Gastrocnemius medialis (tissue), 4 donors: ENCODE measurements at regions of chr17 and their contacts with region 1.

Region 1: GRCh38 chr17:65561394-65562205 is at the start of gene AXIN2:
- DNase-seq: peak; percentile 86 to 91
- ATAC-seq: peak; percentile 51 to 59
- H3K4me3 ChIP-seq: peak within 1 kb of the TSS in 2 of 4 donors; percentile 72 to 99
- H3K27ac ChIP-seq: no peak within 1 kb of the TSS
- H3K4me1 ChIP-seq: peaks cover 47 to 48% of the 10 kb centered on the region in 2 donors
- H3K27me3 ChIP-seq: no peaks in the 10 kb centered on the region
- CTCF ChIP-seq: peak in 3 of 5 experiments; percentile 14 to 49 (median 43)
- POLR2A ChIP-seq: peak in 1 of 2 donors; percentile 69
- total RNA-seq, gene AXIN2: 9.9 to 27.2 (median 17.9) TPM

Region 2: DNA sequence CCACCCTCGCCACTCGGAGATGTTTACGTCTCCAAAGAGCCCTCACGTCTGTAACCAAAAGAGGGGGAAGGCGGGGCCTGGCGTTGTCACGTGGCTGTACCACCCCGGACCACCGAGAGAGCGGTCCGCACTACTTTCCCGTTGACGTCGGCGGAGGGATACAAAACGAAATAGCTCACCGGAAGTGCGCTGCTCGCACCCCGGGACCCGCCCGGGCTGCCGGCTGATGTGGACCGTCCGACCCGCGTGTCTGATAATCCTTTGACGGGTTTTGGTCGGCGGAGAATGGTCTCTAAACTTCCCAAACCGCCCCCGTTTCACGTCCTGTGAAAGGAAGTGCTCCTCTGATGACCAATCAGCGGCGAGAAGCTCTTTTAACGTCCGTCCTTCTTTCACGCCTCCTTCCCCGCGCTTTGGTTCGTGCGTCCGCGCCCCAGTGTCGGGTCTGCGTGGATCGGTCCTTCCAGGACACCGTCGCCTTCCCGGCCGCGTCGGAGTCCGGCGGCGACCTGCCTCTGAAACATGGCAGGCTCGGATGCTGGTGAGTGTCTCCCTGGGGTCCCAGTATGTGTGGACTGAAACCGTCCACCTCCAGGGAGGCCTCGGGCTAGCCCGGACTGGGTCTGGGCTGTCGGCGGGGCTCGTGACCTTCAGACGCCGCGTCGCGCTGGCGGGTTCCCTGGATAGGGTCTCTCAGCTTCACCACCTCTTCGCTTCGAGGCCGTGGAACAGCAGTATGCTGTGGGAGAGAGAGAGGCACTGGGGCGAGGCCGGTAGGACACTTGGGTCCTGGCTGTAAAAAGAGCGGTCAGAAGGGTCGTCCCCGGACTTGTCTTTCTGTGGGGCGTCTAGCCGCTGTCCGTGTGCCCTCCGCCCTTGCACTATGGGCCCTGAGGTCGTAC is 1054.8 kb before region 1 on chr17 and contains the start of gene CEP95:
- in situ Hi-C with region 1: no loop called
- intact Hi-C with region 1: loop called (anchors 5 kb)
- DNase-seq: peak; percentile 94 to 97
- ATAC-seq: peak; percentile 81 to 83
- H3K4me3 ChIP-seq: peak within 1 kb of the TSS; percentile 89 to 98 (median 96)
- H3K27ac ChIP-seq: peak within 1 kb of the TSS; percentile 97 to 100 (median 99)
- H3K4me1 ChIP-seq: peaks cover 36 to 40% of the 10 kb centered on the region in 2 donors
- H3K27me3 ChIP-seq: no peaks in the 10 kb centered on the region
- CTCF ChIP-seq: no peak
- POLR2A ChIP-seq: peak; percentile 82 to 83
- total RNA-seq, gene CEP95: 6.5 to 18.8 (median 17.7) TPM

Region 3: GRCh38 chr17:64975329-64976087 is 586.1 kb before region 1 on chr17:
- in situ Hi-C with region 1: loop called in 3 of 4 experiments (anchors 25 kb)
- intact Hi-C with region 1: no loop called
- DNase-seq: peak; percentile 89 to 92
- ATAC-seq: peak; percentile 90 to 94
- H3K4me3 ChIP-seq: peak overlapping the region; percentile 70 to 95 (median 84)
- H3K27ac ChIP-seq: peak overlapping the region; percentile 94 to 100 (median 98)
- H3K4me1 ChIP-seq: peaks cover 13% of the 10 kb centered on the region in 2 donors
- H3K27me3 ChIP-seq: no peaks in the 10 kb centered on the region
- CTCF ChIP-seq: peak in 1 of 5 experiments; percentile 3
- POLR2A ChIP-seq: peak; percentile 93 to 97

Region 4: DNA sequence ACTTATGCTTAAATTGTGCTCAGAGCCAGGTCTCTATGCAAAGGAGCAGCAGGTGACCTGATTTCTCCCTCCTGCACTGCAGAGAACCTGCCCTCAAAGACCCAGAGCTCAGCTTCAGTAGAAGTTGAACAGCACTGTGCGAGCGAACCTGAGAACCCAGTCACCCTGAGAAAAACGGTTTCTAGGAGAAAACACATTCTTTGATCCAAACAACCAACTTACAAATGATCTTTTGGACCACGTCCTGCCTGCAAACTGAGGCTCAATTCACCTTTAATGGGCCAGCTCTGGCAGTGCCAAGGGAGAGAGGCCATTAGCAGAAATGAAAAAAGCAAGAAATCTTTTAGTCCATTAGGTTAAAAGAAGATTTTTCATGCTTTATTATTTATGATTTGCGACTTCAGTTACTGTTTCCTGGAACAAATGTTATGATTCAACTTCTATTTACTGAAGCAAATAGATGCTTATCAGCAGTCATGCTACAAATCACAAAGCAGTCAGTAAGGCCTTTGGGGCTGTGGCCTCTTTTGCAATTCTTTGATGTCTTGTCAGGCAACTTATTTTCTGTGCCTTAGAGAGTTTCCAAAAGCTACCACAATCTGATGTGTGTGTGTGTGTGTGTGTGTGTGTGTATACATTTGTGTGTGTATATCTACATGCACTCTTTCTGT is 576.6 kb before region 1 on chr17:
- in situ Hi-C with region 1: loop called in 2 of 4 experiments (anchors 25 kb)
- intact Hi-C with region 1: loop called (anchors 2 kb)
- DNase-seq: no peak
- ATAC-seq: no peak
- H3K4me3 ChIP-seq: no peak overlapping the region
- H3K27ac ChIP-seq: peak overlapping the region; percentile 86 to 98 (median 92)
- H3K4me1 ChIP-seq: peaks cover 22 to 25% of the 10 kb centered on the region in 2 donors
- H3K27me3 ChIP-seq: no peaks in the 10 kb centered on the region
- CTCF ChIP-seq: no peak
- POLR2A ChIP-seq: no peak

Region 5: GRCh38 chr17:65407017-65407416 is 154.6 kb before region 1 on chr17:
- in situ Hi-C with region 1: no loop called
- intact Hi-C with region 1: loop called (anchors 5 kb)
- DNase-seq: peak; percentile 40 to 47
- ATAC-seq: peak; percentile 89 to 92
- H3K4me3 ChIP-seq: no peak overlapping the region
- H3K27ac ChIP-seq: peak overlapping the region; percentile 51 to 79 (median 74)
- H3K4me1 ChIP-seq: peaks cover 20 to 25% of the 10 kb centered on the region in 2 donors
- H3K27me3 ChIP-seq: no peaks in the 10 kb centered on the region
- CTCF ChIP-seq: no peak
- POLR2A ChIP-seq: no peak

Region 6: GRCh38 chr17:65523853-65524664 is 37.5 kb before region 1 on chr17:
- in situ Hi-C with region 1: no loop called
- intact Hi-C with region 1: no loop called
- DNase-seq: no peak
- ATAC-seq: no peak
- H3K4me3 ChIP-seq: no peak overlapping the region
- H3K27ac ChIP-seq: no peak overlapping the region
- H3K4me1 ChIP-seq: no peaks in the 10 kb centered on the region
- H3K27me3 ChIP-seq: no peaks in the 10 kb centered on the region
- CTCF ChIP-seq: no peak
- POLR2A ChIP-seq: no peak

Region 7: GRCh38 chr17:65677932-65678331 is 116.3 kb after region 1 on chr17:
- in situ Hi-C with region 1: no loop called
- intact Hi-C with region 1: no loop called
- DNase-seq: no peak
- ATAC-seq: no peak
- H3K4me3 ChIP-seq: no peak overlapping the region
- H3K27ac ChIP-seq: no peak overlapping the region
- H3K4me1 ChIP-seq: no peaks in the 10 kb centered on the region
- H3K27me3 ChIP-seq: no peaks in the 10 kb centered on the region
- CTCF ChIP-seq: no peak
- POLR2A ChIP-seq: no peak

Region 8: GRCh38 chr17:65785109-65785508 is 223.5 kb after region 1 on chr17:
- in situ Hi-C with region 1: no loop called
- intact Hi-C with region 1: loop called (anchors 10 kb)
- DNase-seq: no peak
- ATAC-seq: peak; percentile 54 to 85
- H3K4me3 ChIP-seq: no peak overlapping the region
- H3K27ac ChIP-seq: peak overlapping the region; percentile 34 to 59 (median 47)
- H3K4me1 ChIP-seq: peaks cover 10 to 22% of the 10 kb centered on the region in 2 donors
- H3K27me3 ChIP-seq: no peaks in the 10 kb centered on the region
- CTCF ChIP-seq: no peak
- POLR2A ChIP-seq: no peak